ENCODE measurements at regions of chr11 and their contacts with region 1.

Region 1: DNA sequence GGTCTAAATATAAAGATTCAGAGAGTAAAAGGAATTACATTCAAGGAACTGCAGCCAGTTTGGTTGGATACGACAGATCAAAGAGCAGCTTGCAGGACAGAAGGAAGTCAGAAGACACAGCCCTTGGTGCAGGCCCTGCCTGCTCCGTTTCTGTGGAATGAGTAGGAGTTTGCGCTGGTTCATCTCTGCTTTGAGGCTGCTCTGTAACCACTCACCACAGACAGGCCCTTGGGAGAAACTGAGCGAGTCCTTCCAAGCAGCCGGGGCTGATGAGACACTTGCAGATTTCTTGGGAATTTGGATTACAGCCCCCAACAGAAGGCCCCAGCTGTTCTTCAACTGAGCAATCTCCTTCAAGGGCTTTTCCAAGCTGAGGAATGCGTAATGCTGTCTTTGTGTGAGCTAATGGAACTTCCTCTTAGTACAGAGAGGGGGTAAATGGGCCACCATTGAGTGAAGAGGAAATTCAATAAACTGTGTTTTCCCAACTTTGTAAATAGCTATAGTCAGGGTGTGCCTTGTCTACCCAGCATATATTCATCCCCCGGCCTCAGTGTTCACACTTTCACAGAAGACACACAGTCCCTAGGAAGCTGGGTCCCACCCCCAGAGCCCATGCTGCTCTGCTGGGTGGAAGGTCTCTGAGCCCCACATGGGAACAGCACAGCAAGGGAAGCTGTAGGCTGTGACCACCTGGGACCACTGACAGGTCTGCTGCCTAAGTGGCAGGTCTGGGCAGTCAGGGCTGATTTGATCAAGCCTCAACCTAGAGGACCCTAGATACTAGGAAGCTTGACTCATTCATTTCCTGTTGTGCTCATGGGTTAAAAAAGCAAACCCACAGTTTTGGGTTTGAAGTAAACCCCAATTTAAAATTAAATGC is 16.6 kb downstream of the IL10RA start:
- DNase-seq: peak; percentile 88
- ATAC-seq: peak; percentile 65
- H3K4me3 Mint-ChIP-seq: peak overlapping the region; percentile 49
- H3K27ac Mint-ChIP-seq: peak overlapping the region; percentile 99
- H3K4me1 Mint-ChIP-seq: peaks cover 90% of the 10 kb centered on the region
- H3K27me3 Mint-ChIP-seq: no peaks in the 10 kb centered on the region
- CTCF ChIP-seq: no peak

Region 2: DNA sequence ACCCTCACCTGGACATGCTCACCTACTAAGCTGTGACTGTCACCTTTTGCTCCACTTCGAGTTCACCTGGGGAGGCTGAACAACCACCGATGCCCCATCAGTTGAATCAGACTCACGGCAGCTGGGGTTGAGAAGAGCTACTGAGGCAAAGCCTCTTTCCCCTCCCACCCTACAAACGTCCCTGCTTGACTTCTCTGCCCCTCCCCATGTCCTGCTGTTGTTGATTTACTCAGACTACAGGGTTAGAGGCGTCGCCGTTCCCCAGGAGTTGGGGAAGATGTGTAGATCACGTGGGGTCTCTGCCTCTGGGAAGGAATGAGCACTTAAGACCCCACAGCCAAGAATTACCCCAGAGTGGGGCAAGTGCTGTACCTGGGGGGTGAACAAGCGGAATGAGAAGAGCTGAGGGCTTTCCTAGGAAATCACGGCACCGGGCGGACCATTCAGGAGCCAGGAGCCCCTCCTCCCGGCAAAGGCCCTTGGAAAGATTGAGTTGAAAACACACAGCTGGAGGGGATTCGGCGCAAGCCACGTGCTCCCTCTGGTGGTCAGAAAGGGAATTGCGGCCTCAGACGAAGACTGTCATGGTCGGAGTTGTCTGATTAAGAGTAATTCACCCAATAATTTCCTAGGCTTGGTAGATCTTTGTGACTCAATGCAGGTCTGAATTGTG is 185.3 kb before region 1 on chr11:
- CTCF ChIA-PET with region 1: interaction called, 13 read pairs
- POLR2A ChIA-PET with region 1: interaction called, 10 read pairs
- intact Hi-C with region 1: loop called (anchors 2 kb)
- DNase-seq: peak; percentile 94
- ATAC-seq: peak; percentile 53
- H3K4me3 Mint-ChIP-seq: peak overlapping the region; percentile 63
- H3K27ac Mint-ChIP-seq: peak overlapping the region; percentile 98
- H3K4me1 Mint-ChIP-seq: peaks cover 72% of the 10 kb centered on the region
- H3K27me3 Mint-ChIP-seq: no peaks in the 10 kb centered on the region
- CTCF ChIP-seq: peak; percentile 99

Region 3: GRCh38 chr11:117828611-117829368 is 174.0 kb before region 1 on chr11:
- CTCF ChIA-PET with region 1: interaction called, 5 read pairs
- POLR2A ChIA-PET with region 1: interaction called, 11 read pairs
- intact Hi-C with region 1: no loop called
- DNase-seq: peak; percentile 97
- ATAC-seq: peak; percentile 89
- H3K4me3 Mint-ChIP-seq: peak overlapping the region; percentile 42
- H3K27ac Mint-ChIP-seq: peak overlapping the region; percentile 77
- H3K4me1 Mint-ChIP-seq: peaks cover 68% of the 10 kb centered on the region
- H3K27me3 Mint-ChIP-seq: no peaks in the 10 kb centered on the region
- CTCF ChIP-seq: no peak

Region 4: DNA sequence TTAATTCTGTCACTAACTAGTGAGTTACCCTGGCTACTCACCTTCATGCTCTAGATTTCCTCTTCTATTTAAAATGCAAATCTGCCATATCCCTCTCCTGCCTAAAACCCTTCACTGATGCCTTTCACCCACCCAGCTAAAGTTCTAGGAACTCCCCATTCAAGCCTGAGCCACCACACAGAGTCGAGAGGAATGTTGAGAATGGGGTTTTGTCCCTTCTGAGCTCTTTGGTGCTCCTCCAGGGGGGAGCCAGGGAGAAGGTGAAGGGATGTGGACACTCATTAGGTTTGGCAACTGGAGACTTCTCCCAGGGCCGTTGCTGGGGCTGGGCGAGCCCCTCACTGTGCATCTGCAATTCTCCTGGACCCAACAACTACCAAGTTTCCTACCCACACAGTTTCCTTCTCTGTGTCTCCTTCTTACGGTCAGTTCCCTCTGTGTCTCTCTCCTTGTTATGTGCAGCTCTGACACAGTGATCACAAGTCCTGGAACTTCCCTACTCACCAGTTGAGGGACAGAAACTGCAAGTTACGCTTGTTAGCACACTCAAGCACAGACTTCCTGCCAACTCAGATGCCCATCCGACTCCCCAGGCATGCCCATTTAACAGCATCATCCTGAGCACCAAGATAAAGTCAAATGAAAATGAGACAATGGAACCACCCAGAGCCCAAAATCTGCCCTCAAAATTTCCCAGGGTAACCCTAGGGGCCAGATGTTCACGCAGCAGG is 23.1 kb before region 1 on chr11:
- CTCF ChIA-PET with region 1: interaction called, 11 read pairs
- POLR2A ChIA-PET with region 1: interaction called, 710 read pairs
- intact Hi-C with region 1: no loop called
- DNase-seq: peak; percentile 49
- ATAC-seq: peak; percentile 52
- H3K4me3 Mint-ChIP-seq: no peak overlapping the region
- H3K27ac Mint-ChIP-seq: peak overlapping the region; percentile 90
- H3K4me1 Mint-ChIP-seq: peaks cover 82% of the 10 kb centered on the region
- H3K27me3 Mint-ChIP-seq: no peaks in the 10 kb centered on the region
- CTCF ChIP-seq: no peak

Region 5: DNA sequence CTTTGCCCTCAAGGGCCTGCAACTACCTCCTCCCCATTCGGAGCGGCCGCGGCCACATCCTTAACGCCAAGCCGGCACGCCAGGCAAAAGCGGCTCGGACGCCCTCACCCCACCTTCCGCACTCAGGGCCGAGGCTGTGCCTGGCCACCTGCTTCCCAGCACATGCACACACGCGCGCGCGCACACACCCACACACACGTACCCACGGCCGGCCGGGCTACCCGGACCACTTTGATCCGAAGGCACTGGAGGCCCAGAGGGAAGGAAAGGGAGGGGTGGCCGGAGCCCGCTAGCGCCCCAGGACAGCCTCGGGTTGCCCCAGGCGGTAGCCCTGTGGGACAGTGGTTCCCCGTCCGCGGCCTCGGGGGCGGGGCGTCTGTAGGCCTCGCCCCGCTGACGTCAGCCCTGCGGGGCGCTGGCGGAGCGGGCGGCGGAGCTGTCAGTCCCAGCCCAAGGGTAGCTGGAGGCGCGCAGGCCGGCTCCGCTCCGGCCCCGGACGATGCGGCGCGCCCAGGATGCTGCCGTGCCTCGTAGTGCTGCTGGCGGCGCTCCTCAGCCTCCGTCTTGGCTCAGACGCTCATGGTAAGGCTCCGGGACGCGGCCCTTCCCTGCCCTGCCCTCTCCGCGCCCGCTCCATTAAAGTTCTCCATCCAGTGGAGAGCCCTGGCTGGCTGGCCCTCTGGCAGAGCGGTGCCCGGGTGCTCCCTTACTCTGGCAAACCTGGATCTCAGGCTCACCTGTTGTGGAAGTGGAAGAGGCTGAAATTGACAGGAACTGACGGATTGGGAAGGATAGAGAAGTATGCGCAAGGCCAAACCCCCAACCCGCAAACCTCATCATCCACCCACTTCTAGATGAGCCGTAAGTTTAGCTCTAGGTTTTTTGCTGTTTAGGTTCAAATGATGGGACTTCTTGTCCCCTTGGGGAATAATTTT is 16.6 kb before region 1 on chr11 and contains the start of gene IL10RA:
- CTCF ChIA-PET with region 1: interaction called, 24 read pairs
- POLR2A ChIA-PET with region 1: interaction called, 710 read pairs
- intact Hi-C with region 1: loop called (anchors 1 kb)
- DNase-seq: peak; percentile 89
- ATAC-seq: peak; percentile 85
- H3K4me3 Mint-ChIP-seq: peak within 1 kb of the TSS; percentile 80
- H3K27ac Mint-ChIP-seq: peak within 1 kb of the TSS; percentile 97
- H3K4me1 Mint-ChIP-seq: peaks cover 74% of the 10 kb centered on the region
- H3K27me3 Mint-ChIP-seq: no peaks in the 10 kb centered on the region
- CTCF ChIP-seq: no peak
- total RNA-seq, gene IL10RA: 73.3 to 80.9 TPM

Region 6: DNA sequence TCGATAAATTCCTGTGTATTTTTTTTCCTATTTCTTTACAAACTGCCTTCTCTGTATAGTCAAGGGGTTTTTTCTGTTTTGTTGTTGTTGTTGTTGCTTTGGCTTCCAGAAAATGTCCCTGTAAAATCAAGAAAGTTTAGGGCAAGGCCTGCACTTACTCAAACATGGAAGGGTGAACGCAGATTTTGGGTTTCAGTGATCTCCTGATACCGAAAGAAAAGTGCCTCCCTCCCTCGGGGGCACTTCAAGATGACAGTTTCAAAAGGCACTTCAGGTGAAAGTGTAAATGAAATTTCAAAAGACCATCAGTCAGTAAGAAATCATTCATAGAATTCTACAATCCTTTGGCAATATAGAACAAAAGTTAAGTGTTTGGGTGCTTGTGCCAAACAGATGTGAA is 30.7 kb after region 1 on chr11:
- CTCF ChIA-PET with region 1: interaction called, 4 read pairs
- POLR2A ChIA-PET with region 1: interaction called, 13 read pairs
- intact Hi-C with region 1: no loop called
- DNase-seq: no peak
- ATAC-seq: peak; percentile 49
- H3K4me3 Mint-ChIP-seq: no peak overlapping the region
- H3K27ac Mint-ChIP-seq: peak overlapping the region; percentile 74
- H3K4me1 Mint-ChIP-seq: peaks cover 33% of the 10 kb centered on the region
- H3K27me3 Mint-ChIP-seq: no peaks in the 10 kb centered on the region
- CTCF ChIP-seq: no peak

Region 7: GRCh38 chr11:118046051-118046963 is 43.5 kb after region 1 on chr11:
- CTCF ChIA-PET with region 1: interaction called, 16 read pairs
- POLR2A ChIA-PET with region 1: interaction called, 155 read pairs
- intact Hi-C with region 1: loop called (anchors 1 kb)
- DNase-seq: peak; percentile 68
- ATAC-seq: peak; percentile 79
- H3K4me3 Mint-ChIP-seq: peak overlapping the region; percentile 52
- H3K27ac Mint-ChIP-seq: peak overlapping the region; percentile 92
- H3K4me1 Mint-ChIP-seq: peaks cover 89% of the 10 kb centered on the region
- H3K27me3 Mint-ChIP-seq: no peaks in the 10 kb centered on the region
- CTCF ChIP-seq: no peak

Region 8: GRCh38 chr11:118088477-118088920 is 85.7 kb after region 1 on chr11:
- CTCF ChIA-PET with region 1: no interaction called
- POLR2A ChIA-PET with region 1: no interaction called
- intact Hi-C with region 1: no loop called
- DNase-seq: no peak
- ATAC-seq: no peak
- H3K4me3 Mint-ChIP-seq: no peak overlapping the region
- H3K27ac Mint-ChIP-seq: no peak overlapping the region
- H3K4me1 Mint-ChIP-seq: no peaks in the 10 kb centered on the region
- H3K27me3 Mint-ChIP-seq: no peaks in the 10 kb centered on the region
- CTCF ChIP-seq: no peak

Measured in activated CD8-positive, alpha-beta T cell treated with anti-CD3 and anti-CD28 coated beads for 36 hours (primary cell).